Activated CD8-positive, alpha-beta T cell treated with anti-CD3 and anti-CD28 coated beads for 36 hours (primary cell): ENCODE measurements at regions of chr20 and their contacts with region 1.

Region 1: GRCh38 chr20:10090588-10091166 is 55.9 kb downstream of the ANKEF1 start:
- DNase-seq: peak; percentile 19
- ATAC-seq: peak; percentile 49
- H3K4me3 Mint-ChIP-seq: no peak overlapping the region
- H3K27ac Mint-ChIP-seq: no peak overlapping the region
- H3K4me1 Mint-ChIP-seq: no peaks in the 10 kb centered on the region
- H3K27me3 Mint-ChIP-seq: peaks cover 2% of the 10 kb centered on the region
- CTCF ChIP-seq: peak; percentile 55

Region 2: DNA sequence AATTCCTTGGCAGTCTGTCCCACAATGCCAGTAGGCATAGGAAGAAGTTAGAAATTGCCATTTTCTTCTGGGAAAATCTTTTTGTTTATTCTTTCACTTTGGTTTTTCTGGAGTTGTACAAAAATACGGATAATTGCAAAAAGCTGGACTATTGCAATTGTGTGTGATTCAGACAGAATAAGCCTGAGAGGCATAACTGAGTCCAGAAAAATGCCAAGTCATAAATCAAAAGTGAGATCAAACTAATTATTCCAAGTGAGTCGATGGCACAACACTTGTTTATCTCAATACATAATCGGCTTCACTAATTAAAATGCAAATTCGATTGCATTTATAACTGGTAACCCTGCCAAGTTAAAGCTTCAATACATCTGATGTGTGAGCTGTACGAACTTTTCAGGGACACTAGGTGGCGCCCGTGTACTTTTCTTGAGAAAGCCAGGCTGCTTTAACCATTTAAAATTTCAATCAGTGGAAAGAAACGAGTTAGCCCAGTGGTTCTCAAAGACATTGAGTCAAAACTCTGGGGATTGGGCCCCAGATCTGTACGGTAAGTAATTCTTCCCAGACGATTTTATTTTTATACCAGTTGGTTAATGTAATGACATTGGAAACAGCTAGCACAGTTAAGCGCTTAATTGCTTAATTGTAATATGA is 473.7 kb before region 1 on chr20:
- CTCF ChIA-PET with region 1: interaction called, 7 read pairs
- POLR2A ChIA-PET with region 1: no interaction called
- intact Hi-C with region 1: loop called (anchors 5 kb)
- DNase-seq: peak; percentile 69
- ATAC-seq: peak; percentile 51
- H3K4me3 Mint-ChIP-seq: no peak overlapping the region
- H3K27ac Mint-ChIP-seq: no peak overlapping the region
- H3K4me1 Mint-ChIP-seq: no peaks in the 10 kb centered on the region
- H3K27me3 Mint-ChIP-seq: no peaks in the 10 kb centered on the region
- CTCF ChIP-seq: peak; percentile 91

Region 3: DNA sequence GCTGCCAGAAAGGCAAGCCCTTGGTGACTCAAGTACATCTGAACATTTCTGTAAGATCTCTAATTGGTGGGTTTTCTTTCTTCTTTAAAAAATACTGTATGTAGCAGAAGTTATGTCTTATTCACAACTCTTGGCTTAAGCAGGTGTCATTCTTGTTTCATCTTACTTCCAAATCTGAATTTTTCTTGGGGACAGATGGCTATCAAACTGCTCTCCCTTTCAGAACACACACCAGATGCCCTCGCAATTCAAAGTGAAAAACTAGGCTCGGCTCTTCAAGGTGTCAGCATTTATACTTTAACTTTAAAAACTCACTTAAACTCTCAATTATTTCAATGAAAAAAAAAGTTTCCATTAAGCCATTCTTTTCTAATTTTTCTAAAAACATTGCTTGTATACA is 301.5 kb before region 1 on chr20:
- CTCF ChIA-PET with region 1: no interaction called
- POLR2A ChIA-PET with region 1: no interaction called
- intact Hi-C with region 1: no loop called
- DNase-seq: no peak
- ATAC-seq: no peak
- H3K4me3 Mint-ChIP-seq: no peak overlapping the region
- H3K27ac Mint-ChIP-seq: no peak overlapping the region
- H3K4me1 Mint-ChIP-seq: no peaks in the 10 kb centered on the region
- H3K27me3 Mint-ChIP-seq: no peaks in the 10 kb centered on the region
- CTCF ChIP-seq: no peak

Region 4: GRCh38 chr20:9978397-9979004 is 112.2 kb before region 1 on chr20:
- CTCF ChIA-PET with region 1: interaction called, 88 read pairs
- POLR2A ChIA-PET with region 1: no interaction called
- intact Hi-C with region 1: loop called (anchors 2 kb)
- DNase-seq: peak; percentile 39
- ATAC-seq: peak; percentile 91
- H3K4me3 Mint-ChIP-seq: no peak overlapping the region
- H3K27ac Mint-ChIP-seq: no peak overlapping the region
- H3K4me1 Mint-ChIP-seq: peaks cover 2% of the 10 kb centered on the region
- H3K27me3 Mint-ChIP-seq: peaks cover 1% of the 10 kb centered on the region
- CTCF ChIP-seq: peak; percentile 76

Region 5: DNA sequence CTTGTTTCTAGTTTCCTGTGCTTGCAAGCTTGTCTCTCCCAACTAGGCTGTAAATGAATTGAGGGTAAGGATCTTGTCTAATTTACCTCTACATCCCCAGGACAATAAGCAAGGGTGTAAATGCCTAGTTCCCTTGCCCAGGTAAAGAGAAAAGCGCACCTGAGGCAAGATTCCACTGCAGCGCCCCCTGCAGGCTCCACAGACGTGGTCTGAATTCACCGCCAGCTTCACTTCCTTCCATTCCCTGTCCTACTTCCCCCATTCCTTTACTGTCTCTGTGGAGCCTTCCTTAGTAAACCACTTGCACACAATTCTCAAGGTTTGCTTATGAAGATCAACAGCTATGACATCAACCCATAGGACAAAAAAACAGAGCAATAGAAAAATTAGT is 13.6 kb before region 1 on chr20:
- CTCF ChIA-PET with region 1: interaction called, 36 read pairs
- POLR2A ChIA-PET with region 1: no interaction called
- intact Hi-C with region 1: no loop called
- DNase-seq: peak; percentile 4
- ATAC-seq: no peak
- H3K4me3 Mint-ChIP-seq: no peak overlapping the region
- H3K27ac Mint-ChIP-seq: no peak overlapping the region
- H3K4me1 Mint-ChIP-seq: no peaks in the 10 kb centered on the region
- H3K27me3 Mint-ChIP-seq: peaks cover 17% of the 10 kb centered on the region
- CTCF ChIP-seq: peak; percentile 28

Region 6: DNA sequence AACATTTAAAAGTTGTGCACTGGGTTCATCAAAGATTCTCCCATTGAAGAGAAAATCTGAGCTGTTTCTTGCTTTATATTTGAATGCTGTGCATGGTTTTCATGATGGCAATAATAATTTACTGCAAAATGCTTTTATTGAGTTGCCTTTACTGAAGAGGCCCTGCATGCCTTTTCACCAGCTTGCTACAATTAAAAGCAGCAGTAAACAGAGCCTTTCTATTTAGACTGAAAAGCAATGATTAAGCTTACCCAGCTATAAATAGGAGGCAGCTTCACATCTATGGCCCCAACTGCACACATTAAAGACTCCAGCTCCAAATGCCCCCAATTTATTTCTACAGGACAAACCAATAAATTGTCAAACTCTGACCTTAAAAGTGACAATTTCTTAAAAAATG is 14.4 kb after region 1 on chr20:
- CTCF ChIA-PET with region 1: interaction called, 21 read pairs
- POLR2A ChIA-PET with region 1: no interaction called
- intact Hi-C with region 1: no loop called
- DNase-seq: no peak
- ATAC-seq: no peak
- H3K4me3 Mint-ChIP-seq: no peak overlapping the region
- H3K27ac Mint-ChIP-seq: no peak overlapping the region
- H3K4me1 Mint-ChIP-seq: no peaks in the 10 kb centered on the region
- H3K27me3 Mint-ChIP-seq: peaks cover 6% of the 10 kb centered on the region
- CTCF ChIP-seq: no peak